Caco-2 (cell line): ENCODE measurements at regions of chr19 and their contacts with region 1.

Region 1: GRCh38 chr19:50209131-50209530 is 5.7 kb downstream of the MYH14 start:
- DNase-seq: no peak
- H3K4me3 ChIP-seq: no peak overlapping the region
- H3K4me3 Mint-ChIP-seq: no peak overlapping the region
- H3K27ac Mint-ChIP-seq: no peak overlapping the region
- H3K4me1 ChIP-seq: peaks cover 8% of the 10 kb centered on the region
- H3K4me1 Mint-ChIP-seq: peaks cover 15% of the 10 kb centered on the region
- H3K27me3 ChIP-seq: no peaks in the 10 kb centered on the region
- H3K27me3 Mint-ChIP-seq: no peaks in the 10 kb centered on the region
- CTCF ChIP-seq: no peak

Region 2: DNA sequence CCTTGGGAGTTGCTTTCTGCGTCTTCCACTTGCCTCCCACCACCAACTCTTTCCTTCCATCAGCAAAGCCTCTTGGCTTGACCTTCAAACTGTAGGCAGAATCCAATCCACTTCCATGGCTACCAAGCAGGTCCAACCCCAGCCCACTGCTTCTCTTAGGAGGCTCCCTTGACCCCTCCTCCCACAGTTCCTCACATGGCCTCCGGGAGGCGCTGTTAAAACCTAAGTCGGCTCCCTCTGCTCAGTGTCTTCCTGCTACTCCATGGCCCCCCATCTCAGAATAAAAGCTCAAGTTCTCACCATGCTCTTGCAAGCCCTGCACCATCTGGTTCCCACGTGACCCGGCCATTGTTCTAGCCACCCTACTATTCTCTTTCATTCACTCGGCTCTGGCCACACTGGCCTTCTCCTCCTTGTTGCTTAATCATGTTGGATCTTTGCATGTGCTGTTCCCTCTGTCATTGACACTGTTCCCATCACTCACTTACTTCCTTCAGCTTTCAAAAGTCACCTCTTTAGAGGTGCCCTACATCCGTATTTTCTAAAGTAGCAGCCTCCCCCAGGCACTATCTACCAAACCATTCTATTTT is 53.5 kb before region 1 on chr19:
- CTCF ChIA-PET with region 1: no interaction called
- POLR2A ChIA-PET with region 1: interaction called, 12 read pairs
- intact Hi-C with region 1: no loop called
- DNase-seq: no peak
- H3K4me3 ChIP-seq: no peak overlapping the region
- H3K4me3 Mint-ChIP-seq: no peak overlapping the region
- H3K27ac Mint-ChIP-seq: no peak overlapping the region
- H3K4me1 ChIP-seq: no peaks in the 10 kb centered on the region
- H3K4me1 Mint-ChIP-seq: no peaks in the 10 kb centered on the region
- H3K27me3 ChIP-seq: no peaks in the 10 kb centered on the region
- H3K27me3 Mint-ChIP-seq: peaks cover 25% of the 10 kb centered on the region
- CTCF ChIP-seq: peak in 1 of 2 experiments; percentile 39